Activated T-helper 2 cell treated with anti-CD3 and anti-CD28 coated beads, Interferon-gamma antibody, Interleukin-2, Interleukin-4, amounts not matched to agents 10 μg/mL and 5 μg/mL and 100 μg/mL, durations not matched to agents 14 hours and 24 hours and 36 hours (primary cell): ENCODE measurements at regions of chr1 and their contacts with region 1.

Region 1: DNA sequence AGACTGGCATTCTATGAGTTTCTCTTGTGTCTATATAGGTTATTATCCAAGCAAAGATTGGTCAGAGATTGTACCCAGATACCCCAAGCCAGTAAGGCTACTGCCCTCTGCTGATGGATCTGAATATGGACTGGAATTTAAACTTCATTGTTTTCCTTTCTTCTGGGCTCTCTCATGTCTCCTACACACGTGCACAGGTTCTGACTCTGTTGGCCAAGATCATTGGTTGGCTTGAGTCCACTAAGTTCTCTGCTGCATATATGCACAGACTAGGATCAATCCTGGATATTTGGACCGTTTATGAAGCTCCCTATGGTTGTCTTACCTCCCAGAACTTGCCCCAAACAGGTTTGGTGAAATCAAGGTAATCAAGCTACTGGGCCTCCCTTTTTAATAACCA is 69.7 kb downstream of the CC2D1B start:
- DNase-seq: no peak
- H3K4me3 Mint-ChIP-seq: no peak overlapping the region
- H3K27ac Mint-ChIP-seq: no peak overlapping the region
- H3K4me1 Mint-ChIP-seq: peaks cover 2% of the 10 kb centered on the region
- H3K27me3 Mint-ChIP-seq: no peaks in the 10 kb centered on the region

Region 2: GRCh38 chr1:50968158-50968820 is 1328.1 kb before region 1 on chr1:
- intact Hi-C with region 1: no loop called
- DNase-seq: peak; percentile 84
- H3K4me3 Mint-ChIP-seq: peak overlapping the region; percentile 95
- H3K27ac Mint-ChIP-seq: peak overlapping the region; percentile 96
- H3K4me1 Mint-ChIP-seq: peaks cover 23% of the 10 kb centered on the region
- H3K27me3 Mint-ChIP-seq: peaks cover 13% of the 10 kb centered on the region

Region 3: GRCh38 chr1:52127181-52128180 is 168.9 kb before region 1 on chr1:
- intact Hi-C with region 1: loop called (anchors 1 kb)
- DNase-seq: no peak
- H3K4me3 Mint-ChIP-seq: no peak overlapping the region
- H3K27ac Mint-ChIP-seq: no peak overlapping the region
- H3K4me1 Mint-ChIP-seq: peaks cover 4% of the 10 kb centered on the region
- H3K27me3 Mint-ChIP-seq: peaks cover 37% of the 10 kb centered on the region